Activated CD4-positive, alpha-beta memory T cell treated with anti-CD3 and anti-CD28 coated beads for 36 hours (primary cell): ENCODE measurements at regions of chr6 and their contacts with region 1.

Region 1: DNA sequence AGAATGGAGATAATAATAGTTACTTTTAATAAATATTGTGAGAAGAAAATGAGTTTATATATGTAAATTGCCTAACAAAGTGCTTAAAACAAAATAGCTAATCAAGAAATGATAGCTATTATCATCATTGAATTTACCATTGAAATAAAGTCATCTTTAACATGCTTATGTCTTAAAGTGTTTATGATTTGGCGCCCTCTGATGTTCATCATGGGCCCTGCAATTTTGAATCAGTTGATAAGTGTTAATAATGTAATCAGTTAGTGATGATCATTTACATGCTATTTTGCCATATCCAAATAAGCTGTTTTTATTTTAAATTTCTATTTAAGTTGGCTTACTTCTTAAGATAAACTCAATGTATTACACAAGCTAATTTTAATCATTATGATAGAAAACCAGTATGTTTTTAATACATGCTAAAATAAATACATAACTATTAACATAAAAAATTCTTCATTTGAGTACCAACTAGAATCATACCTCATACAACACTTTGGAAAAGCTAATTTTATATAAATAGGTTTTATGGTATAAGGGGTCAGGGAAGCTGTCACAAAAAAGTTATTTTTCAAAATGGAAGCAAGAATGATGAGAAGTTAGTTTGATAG is 39.2 kb upstream of the TPD52L1 start:
- DNase-seq: peak; percentile 49
- H3K4me3 Mint-ChIP-seq: no peak overlapping the region
- H3K27ac Mint-ChIP-seq: no peak overlapping the region
- H3K4me1 Mint-ChIP-seq: no peaks in the 10 kb centered on the region
- H3K27me3 Mint-ChIP-seq: no peaks in the 10 kb centered on the region

Region 2: DNA sequence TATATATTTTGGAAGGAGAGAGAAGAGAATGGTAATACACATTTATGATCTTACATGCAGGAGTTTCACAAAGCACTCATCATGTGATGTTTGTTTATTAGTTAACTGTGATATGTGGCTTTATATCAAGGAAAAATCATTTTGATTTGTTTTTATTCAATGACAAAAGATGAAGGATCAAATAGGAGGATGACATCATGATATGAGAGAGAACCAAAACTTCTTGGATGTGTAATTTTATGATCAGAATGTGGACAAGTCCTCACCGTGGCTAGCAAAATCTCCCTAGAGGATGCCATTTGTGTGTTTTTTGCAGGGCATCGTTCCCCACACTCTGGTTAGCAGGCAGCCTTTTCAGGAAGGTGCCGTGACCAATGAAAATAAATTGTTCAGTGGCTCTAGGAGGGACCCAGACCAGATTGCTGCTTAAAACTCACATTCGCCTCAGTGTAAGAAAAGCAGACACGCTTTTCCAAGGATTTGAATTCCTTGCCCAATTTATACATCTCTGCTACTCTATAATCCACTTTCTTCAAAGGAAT is 758.0 kb before region 1 on chr6:
- CTCF ChIA-PET with region 1: no interaction called
- POLR2A ChIA-PET with region 1: no interaction called
- intact Hi-C with region 1: no loop called
- DNase-seq: no peak
- H3K4me3 Mint-ChIP-seq: no peak overlapping the region
- H3K27ac Mint-ChIP-seq: no peak overlapping the region
- H3K4me1 Mint-ChIP-seq: no peaks in the 10 kb centered on the region
- H3K27me3 Mint-ChIP-seq: no peaks in the 10 kb centered on the region

Region 3: DNA sequence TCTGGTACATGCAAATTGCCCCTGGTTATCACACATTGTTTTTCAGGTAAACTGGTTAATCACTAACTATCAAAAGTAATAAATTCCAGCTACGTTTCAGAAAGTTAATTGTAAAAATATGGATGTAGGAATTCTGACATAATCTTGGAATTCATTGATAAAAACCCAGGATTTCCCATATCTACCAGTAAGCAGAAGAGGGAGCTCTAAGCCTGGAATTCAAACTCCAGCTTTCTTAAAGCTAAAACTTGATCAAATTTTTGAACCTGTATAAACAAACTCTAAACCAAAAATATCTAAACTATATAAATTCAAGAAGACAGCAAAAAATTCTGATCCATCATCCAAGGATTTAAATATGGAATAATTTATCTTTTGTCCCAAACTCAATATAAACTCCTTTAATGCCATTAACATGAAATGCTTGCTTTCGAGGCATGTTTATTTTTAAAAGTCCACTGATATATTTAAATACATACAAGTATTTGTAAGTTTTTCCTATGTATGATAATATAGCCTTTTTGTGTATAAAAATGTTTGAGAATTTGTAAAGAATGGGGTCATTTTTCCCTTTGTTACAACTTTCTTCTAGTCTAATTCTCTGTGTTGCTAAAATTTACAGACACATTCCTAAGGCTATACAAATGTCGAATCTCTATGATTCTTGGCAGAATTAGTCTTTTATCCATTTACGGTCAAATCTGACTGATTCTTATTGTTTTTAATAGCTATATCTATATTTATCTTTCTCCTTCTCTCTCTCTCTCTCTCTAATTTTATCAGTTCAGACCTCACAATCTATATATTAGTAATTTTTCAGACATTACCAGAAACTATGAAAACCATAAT is 243.5 kb before region 1 on chr6:
- CTCF ChIA-PET with region 1: interaction called, 12 read pairs
- POLR2A ChIA-PET with region 1: no interaction called
- intact Hi-C with region 1: loop called (anchors 1 kb)
- DNase-seq: no peak
- H3K4me3 Mint-ChIP-seq: no peak overlapping the region
- H3K27ac Mint-ChIP-seq: no peak overlapping the region
- H3K4me1 Mint-ChIP-seq: no peaks in the 10 kb centered on the region
- H3K27me3 Mint-ChIP-seq: peaks cover 2% of the 10 kb centered on the region

Region 4: DNA sequence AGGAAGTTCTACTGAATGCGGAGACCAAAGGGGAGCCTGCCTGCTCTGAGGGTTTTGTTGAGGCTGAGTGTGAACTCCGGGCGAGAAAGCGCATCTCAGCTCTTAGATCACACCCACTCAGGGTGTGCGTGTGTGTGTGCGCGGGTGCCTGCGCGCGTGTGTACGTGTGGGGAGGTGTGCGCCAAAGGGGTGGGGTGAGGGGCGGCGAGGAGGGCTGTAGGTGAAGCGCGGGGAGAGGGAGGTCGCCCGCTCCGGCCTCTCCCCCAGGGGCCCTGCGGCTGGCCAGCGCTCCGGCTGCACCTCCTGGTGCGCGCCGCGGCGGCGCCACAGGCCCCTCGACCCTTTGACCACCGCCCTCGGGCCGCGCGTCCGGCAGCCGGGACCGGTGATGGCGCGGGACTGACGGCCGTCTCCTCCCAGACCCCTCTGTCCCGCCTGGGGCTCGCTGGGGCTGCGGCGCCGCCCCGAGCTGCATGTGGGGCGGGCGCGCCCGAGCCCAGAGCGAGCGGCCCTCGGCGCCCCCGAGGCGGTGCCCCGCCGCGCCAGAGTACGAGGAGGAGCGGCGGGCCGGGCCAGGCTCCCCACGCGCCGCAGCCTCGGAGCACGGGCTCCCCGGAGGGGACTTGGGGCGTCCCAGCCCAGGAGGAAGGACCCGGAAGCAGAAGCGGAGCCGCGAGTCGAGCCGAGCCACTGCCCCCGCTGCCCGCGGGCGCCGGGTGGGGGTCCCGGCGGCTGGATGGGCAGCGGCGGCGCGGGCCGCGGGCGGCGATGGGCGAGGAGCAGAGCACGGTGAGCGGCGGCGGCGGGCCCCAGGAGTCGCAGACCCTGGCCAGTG is 152.4 kb before region 1 on chr6 and contains the start of gene RNF217:
- CTCF ChIA-PET with region 1: no interaction called
- POLR2A ChIA-PET with region 1: no interaction called
- intact Hi-C with region 1: loop called (anchors 5 kb)
- DNase-seq: peak; percentile 33
- H3K4me3 Mint-ChIP-seq: peak within 1 kb of the TSS; percentile 71
- H3K27ac Mint-ChIP-seq: no peak within 1 kb of the TSS
- H3K4me1 Mint-ChIP-seq: peaks cover 17% of the 10 kb centered on the region
- H3K27me3 Mint-ChIP-seq: peaks cover 46% of the 10 kb centered on the region
- total RNA-seq, gene RNF217: 0.52 to 1.1 TPM

Region 5: GRCh38 chr6:125013938-125014660 is 100.3 kb before region 1 on chr6:
- CTCF ChIA-PET with region 1: no interaction called
- POLR2A ChIA-PET with region 1: no interaction called
- intact Hi-C with region 1: no loop called
- DNase-seq: no peak
- H3K4me3 Mint-ChIP-seq: no peak overlapping the region
- H3K27ac Mint-ChIP-seq: no peak overlapping the region
- H3K4me1 Mint-ChIP-seq: peaks cover 2% of the 10 kb centered on the region
- H3K27me3 Mint-ChIP-seq: no peaks in the 10 kb centered on the region

Region 6: DNA sequence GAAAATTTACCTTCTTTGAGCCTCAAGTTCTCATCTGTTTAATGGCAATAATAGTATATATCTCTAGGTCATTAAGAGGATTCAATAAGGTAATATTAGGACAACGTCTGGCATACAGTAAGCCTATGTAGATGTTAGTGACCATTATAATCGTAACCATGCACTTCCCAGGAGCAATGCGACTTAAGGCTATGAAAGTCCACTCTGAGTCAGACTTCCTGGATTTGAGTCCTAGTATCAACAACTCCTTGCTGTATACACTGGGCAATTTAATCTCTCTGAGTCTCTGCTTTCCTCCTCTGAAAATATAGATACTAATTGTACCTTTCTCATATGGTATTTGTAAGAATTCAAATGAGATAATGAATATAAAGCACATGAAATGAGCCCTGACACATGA is 355.6 kb after region 1 on chr6:
- CTCF ChIA-PET with region 1: no interaction called
- POLR2A ChIA-PET with region 1: no interaction called
- intact Hi-C with region 1: no loop called
- DNase-seq: no peak
- H3K4me3 Mint-ChIP-seq: no peak overlapping the region
- H3K27ac Mint-ChIP-seq: no peak overlapping the region
- H3K4me1 Mint-ChIP-seq: no peaks in the 10 kb centered on the region
- H3K27me3 Mint-ChIP-seq: peaks cover 12% of the 10 kb centered on the region